Left cardiac atrium (tissue), 4 donors: ENCODE measurements at regions of chr3 and their contacts with region 1.

Region 1: GRCh38 chr3:196432137-196432879 is at the start of gene UBXN7:
- DNase-seq: peak; percentile 94
- ATAC-seq: peak; percentile 97 to 99
- total RNA-seq, gene UBXN7: 29.5 to 37.4 TPM

Region 2: DNA sequence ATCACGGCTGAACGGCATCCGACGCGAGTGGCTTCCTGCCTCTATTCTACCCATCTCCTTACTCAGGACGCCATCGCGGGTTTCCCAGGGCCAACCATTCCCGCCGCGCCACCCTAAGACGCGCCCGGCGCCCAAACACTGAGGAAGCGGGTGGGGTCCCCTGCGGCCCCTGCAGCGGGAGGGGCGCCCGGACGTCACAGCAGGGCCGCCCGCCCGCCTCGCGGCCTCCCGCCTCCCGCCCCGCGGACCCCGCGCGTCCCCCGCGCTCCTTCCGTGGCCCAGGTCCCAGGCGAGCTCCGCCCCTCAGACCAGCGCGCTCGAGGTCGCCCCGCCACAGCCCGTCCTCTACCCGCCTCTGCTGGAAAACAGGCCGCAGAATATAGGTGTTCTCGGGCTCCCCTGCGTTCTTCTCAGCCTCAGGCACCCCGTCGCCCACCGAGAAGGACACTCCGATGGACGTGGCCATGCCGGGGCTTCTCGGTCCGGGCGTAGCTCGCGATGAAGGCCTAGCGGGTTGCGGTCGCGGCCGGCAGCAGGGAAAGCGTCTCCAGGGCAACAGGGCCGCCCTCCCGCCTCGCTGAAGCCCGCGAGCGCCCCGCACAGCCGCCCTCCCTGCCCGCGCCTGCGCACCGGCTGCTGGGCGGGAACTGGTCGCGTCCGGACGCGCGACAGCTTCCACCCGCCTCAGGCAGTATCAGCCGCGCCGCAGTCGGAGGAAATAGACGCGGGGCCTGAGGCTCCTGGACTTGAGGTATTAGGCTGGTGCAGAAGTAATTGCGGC is 114.4 kb before region 1 on chr3 and contains the start of gene DYNLT2B:
- intact Hi-C with region 1: no loop called
- DNase-seq: peak; percentile 92
- ATAC-seq: peak; percentile 98 to 99
- total RNA-seq, gene DYNLT2B: 3.5 to 4.3 TPM

Region 3: GRCh38 chr3:196502775-196503195 is 70.5 kb after region 1 on chr3:
- intact Hi-C with region 1: loop called in 1 of 2 experiments (anchors 5 kb)
- DNase-seq: peak; percentile 74
- ATAC-seq: peak; percentile 60 to 81